ENCODE measurements at regions of chr1 and their contacts with region 1.

Region 1: DNA sequence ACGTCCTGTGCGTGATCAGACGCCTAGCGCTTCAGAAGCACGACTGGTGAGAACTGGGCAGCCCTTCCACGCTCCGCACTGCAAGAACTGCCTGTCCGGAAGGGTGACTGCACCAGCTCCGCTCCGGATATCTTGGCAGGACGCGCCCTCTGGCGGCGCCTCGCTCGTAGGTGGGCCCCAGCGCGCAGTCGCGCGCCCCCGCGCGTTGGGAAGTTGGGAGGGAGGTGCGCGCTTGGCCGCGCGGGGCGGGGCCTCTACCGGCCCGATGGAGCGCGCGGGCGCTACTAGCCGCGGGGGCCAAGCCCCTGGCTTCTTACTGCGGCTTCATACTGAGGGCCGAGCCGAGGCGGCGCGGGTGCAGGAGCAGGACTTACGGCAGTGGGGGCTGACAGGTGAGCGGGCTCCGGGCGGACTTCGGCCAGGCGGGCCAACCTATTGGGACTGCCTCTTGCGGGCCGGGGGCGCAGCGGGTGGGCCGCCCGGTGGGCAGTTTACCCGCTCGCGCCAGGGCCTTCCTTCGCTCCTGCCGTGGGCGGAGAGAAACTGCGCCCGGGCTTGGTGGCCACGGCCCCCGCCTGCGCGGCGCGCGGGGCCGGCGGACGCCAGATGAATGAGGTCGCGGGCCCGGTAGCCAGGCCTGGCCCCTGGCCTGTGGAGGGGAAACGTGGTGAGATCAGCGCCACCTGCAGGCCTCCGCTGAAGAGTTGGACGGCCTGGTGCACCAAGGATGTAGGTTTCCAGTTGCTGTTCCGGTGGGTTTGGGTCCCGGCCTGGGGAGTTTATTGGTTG is at the start of gene CHD1L:
- DNase-seq: peak; percentile 96
- H3K4me3 ChIP-seq: peak within 1 kb of the TSS; percentile 98
- H3K27ac ChIP-seq: peak within 1 kb of the TSS; percentile 96
- H3K4me1 ChIP-seq: peaks cover 29% of the 10 kb centered on the region
- H3K27me3 ChIP-seq: no peaks in the 10 kb centered on the region
- CTCF ChIP-seq: peak; percentile 80
- total RNA-seq, gene CHD1L: 7.6 TPM

Region 2: GRCh38 chr1:147177611-147178380 is 64.8 kb before region 1 on chr1:
- intact Hi-C with region 1: loop called (anchors 5 kb)
- DNase-seq: peak; percentile 13
- H3K4me3 ChIP-seq: peak overlapping the region; percentile 32
- H3K27ac ChIP-seq: no peak overlapping the region
- H3K4me1 ChIP-seq: peaks cover 22% of the 10 kb centered on the region
- H3K27me3 ChIP-seq: no peaks in the 10 kb centered on the region
- CTCF ChIP-seq: no peak

Region 3: DNA sequence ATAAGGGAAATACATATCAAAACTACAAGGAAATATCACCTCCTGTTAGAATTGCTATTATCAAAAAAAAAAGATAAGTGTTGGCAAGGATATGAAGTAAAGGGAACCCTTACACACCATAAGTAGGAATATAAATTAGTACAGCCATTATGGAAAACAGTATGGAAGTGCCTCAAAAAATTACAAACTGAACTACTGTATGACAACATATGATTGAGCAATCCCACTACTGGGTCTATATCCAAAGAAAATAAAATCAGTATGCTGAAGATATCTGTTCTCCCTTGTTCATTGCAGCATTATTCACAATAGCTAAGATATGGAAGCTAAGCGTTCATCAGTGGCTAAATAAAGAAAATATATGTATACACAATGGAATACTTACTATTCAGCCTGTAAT is 59.6 kb after region 1 on chr1:
- intact Hi-C with region 1: no loop called
- DNase-seq: no peak
- H3K4me3 ChIP-seq: no peak overlapping the region
- H3K27ac ChIP-seq: no peak overlapping the region
- H3K4me1 ChIP-seq: no peaks in the 10 kb centered on the region
- H3K27me3 ChIP-seq: no peaks in the 10 kb centered on the region
- CTCF ChIP-seq: no peak

Region 4: GRCh38 chr1:147341246-147341645 is 98.6 kb after region 1 on chr1:
- intact Hi-C with region 1: no loop called
- DNase-seq: no peak
- H3K4me3 ChIP-seq: no peak overlapping the region
- H3K27ac ChIP-seq: no peak overlapping the region
- H3K4me1 ChIP-seq: no peaks in the 10 kb centered on the region
- H3K27me3 ChIP-seq: peaks cover 40% of the 10 kb centered on the region
- CTCF ChIP-seq: no peak

Region 5: DNA sequence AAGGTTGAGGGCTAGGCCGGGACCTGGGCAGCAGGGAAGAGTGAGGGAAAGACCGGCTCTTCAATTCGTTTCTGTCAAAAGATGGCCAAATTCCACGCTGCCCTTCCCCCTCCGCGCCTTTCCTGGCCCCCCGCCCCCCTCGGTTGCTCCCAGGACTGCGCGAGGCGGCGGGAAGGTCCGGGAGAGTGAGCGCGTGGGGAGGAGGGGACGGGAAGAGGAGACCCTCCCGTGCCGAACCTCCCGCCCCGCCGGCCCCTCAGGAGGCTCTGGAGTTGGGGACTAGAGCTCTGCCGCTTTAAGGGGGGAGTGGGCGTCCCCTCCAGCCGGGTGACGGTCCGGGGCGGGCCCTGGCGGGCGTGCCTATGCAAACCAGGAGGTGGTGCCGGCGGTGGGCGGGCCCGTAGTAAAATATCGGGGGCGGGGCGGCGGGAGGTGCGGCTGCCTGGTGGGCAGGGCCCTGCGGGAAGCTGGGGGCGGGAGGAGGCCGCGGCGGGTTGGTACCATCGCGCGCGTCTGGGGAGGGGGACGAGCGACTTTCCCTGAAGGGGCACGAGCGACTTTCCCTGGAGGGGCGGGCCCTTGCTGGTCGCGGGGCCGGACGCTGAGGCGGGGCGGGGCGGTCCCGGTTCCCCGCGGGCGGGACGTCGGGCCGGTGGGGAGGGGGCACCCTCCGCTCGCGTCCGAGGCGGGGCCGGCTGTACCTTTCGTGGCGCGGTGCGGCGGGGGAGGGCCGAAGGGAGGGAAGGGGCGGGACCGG is 356.9 kb after region 1 on chr1:
- intact Hi-C with region 1: no loop called
- DNase-seq: peak; percentile 99
- H3K4me3 ChIP-seq: peak overlapping the region; percentile 83
- H3K27ac ChIP-seq: peak overlapping the region; percentile 93
- H3K4me1 ChIP-seq: peaks cover 27% of the 10 kb centered on the region
- H3K27me3 ChIP-seq: no peaks in the 10 kb centered on the region
- CTCF ChIP-seq: no peak

Measured in left ventricle myocardium inferior (tissue), 1 donor.